Mammary epithelial cell (primary cell): ENCODE measurements at regions of chr11 and their contacts with region 1.

Region 1: DNA sequence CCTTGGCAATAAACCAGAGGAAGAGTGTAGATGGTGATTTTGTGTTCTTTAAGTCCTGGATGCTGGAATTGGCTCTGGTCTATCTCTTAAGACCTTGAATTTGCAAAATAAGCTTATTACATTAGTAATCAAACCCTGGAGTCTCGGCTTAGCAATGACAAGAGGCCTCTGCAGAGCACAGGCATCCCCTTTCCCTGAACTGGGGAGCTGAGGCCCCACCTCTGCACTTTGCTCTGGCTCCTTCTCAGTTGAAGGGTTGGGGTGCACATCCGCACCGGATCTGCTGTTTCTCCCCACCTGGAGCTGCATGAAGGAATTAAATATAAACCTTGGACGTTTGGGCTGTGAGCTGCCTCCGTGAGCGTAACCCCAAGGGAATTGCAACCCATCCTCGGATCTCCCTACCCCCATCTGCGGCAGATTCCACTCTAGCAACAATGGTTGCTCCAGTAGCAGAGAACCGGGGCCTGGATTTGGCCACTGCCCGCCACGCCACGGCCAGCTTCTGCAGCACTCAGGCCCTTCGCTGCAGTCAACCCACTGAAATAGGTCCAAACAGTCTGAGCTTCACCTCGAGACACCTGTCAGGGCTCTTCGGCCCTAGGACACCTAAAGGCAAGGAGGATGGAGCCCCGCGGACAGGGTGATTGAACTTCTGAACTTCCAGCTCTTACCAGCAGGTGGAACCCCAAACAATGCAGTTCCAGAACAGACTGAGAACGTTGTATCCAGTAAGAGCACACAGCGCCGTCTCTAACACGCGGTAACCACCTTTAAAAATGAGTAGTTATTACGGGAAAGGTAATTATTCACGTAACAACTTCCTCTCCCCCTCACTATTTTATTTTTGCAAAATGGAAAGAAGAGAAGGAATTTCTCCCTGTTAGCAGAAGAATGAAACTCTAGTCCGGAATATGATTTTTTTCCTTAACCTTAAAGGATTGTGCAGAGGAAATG is 54.8 kb upstream of the CAPRIN1 start:
- DNase-seq: peak; percentile 69
- H3K4me3 ChIP-seq: no peak overlapping the region
- H3K27ac ChIP-seq: no peak overlapping the region
- H3K4me1 ChIP-seq: peaks cover 9% of the 10 kb centered on the region
- H3K27me3 ChIP-seq: no peaks in the 10 kb centered on the region
- CTCF ChIP-seq: peak; percentile 81 to 86

Region 2: DNA sequence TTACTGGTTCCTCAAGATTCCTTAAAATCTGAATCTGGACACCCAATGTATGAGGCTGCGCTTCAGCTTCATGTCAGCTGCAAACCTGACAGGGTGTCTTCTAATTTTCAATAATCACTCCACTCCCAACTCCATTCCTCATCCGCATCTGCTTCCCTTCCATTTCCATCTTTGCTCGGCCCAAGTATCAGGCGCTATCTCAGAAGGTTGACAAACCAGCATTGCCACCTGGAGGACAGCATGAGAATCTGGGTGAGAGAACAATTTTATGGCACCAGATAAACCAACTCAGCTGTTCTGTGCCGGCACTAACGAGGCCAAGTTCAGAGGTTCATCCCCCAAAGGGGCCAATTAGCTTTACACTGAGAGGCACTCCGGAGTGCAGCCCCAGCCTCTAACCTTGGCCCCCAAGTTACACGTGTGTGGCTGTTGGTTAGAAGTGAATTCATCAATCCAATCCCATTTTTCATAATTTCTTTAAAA is 25.8 kb before region 1 on chr11:
- CTCF ChIA-PET with region 1: interaction called, 18 read pairs
- dilution Hi-C with region 1: no loop called
- in situ Hi-C with region 1: no loop called
- intact Hi-C with region 1: no loop called
- DNase-seq: peak; percentile 42
- H3K4me3 ChIP-seq: no peak overlapping the region
- H3K27ac ChIP-seq: no peak overlapping the region
- H3K4me1 ChIP-seq: no peaks in the 10 kb centered on the region
- H3K27me3 ChIP-seq: no peaks in the 10 kb centered on the region
- CTCF ChIP-seq: peak; percentile 63 to 79

Region 3: DNA sequence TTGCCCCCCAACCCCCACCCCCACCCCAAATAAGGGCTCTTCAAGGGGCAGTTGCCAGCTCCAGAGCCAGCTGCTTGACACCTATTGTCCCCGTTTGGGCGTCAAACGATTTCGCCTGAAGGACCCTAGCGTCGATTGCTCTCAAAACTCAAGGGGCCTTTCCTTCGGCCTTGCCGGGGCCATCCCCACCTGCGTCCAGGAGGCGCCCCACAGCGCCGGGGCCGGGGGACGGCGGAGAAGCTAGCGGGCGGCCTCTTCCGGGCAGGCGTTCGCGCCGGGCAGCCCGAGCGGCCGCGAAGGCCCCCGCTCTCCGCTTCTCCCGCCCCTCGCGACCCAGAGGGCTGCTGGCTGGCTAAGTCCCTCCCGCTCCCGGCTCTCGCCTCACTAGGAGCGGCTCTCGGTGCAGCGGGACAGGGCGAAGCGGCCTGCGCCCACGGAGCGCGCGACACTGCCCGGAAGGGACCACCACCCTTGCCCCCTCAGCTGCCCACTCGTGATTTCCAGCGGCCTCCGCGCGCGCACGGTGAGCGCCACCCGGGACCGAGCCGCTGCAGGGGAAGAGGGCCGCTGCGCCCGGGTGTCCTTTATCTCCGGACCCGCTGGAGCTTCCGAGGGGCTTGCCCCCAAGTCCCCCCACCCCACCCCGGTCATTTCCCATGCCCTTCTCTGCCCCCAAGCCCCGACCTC is 54.7 kb after region 1 on chr11 and contains the start of gene CAPRIN1:
- CTCF ChIA-PET with region 1: interaction called, 6 read pairs
- dilution Hi-C with region 1: no loop called
- in situ Hi-C with region 1: no loop called
- intact Hi-C with region 1: loop called (anchors 1 kb)
- DNase-seq: peak; percentile 89
- H3K4me3 ChIP-seq: peak within 1 kb of the TSS; percentile 90 to 100 (median 99)
- H3K27ac ChIP-seq: peak within 1 kb of the TSS; percentile 94
- H3K4me1 ChIP-seq: peaks cover 10% of the 10 kb centered on the region
- H3K27me3 ChIP-seq: no peaks in the 10 kb centered on the region
- CTCF ChIP-seq: no peak
- total RNA-seq, gene CAPRIN1: 194 to 217 TPM

Region 4: DNA sequence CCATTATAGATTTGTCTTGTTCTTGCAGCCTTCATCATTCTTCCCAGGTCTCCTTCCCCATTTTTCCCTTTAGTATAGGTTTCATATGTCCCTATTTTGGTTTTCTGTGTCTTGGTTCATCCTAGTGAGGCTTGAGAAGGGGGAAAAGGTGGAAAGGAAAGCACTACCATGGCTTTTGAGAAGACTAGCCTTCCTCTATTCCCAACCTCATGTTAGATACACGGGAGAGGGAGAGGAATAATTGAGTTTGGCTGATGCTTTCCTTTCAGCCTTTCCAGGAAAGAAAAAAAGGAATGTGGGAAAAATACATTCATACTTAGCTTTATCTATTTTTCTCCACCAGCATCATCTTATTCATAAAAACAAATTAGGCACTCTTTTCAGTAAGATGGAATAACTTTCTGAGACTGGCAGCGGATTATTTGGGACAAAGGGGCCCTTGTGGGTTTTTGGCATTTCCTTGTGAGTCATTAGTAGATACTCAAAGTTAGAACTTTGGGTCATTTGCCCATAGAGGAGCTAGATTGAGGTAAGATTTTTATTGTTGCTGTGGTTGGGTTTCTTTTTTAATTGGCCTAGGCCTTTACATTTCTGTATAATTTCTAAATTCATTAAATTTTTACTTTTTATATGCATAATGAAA is 78.5 kb after region 1 on chr11:
- CTCF ChIA-PET with region 1: no interaction called
- dilution Hi-C with region 1: no loop called
- in situ Hi-C with region 1: loop called in 1 of 2 experiments (anchors 10 kb)
- intact Hi-C with region 1: loop called (anchors 1 kb)
- DNase-seq: peak; percentile 83
- H3K4me3 ChIP-seq: no peak overlapping the region
- H3K27ac ChIP-seq: peak overlapping the region; percentile 86
- H3K4me1 ChIP-seq: peaks cover 30% of the 10 kb centered on the region
- H3K27me3 ChIP-seq: no peaks in the 10 kb centered on the region
- CTCF ChIP-seq: no peak

Region 5: GRCh38 chr11:34105079-34105956 is 108.5 kb after region 1 on chr11 and contains the start of gene NAT10:
- CTCF ChIA-PET with region 1: no interaction called
- dilution Hi-C with region 1: no loop called
- in situ Hi-C with region 1: no loop called
- intact Hi-C with region 1: loop called (anchors 1 kb)
- DNase-seq: peak; percentile 99
- H3K4me3 ChIP-seq: peak within 1 kb of the TSS; percentile 58 to 77 (median 76)
- H3K27ac ChIP-seq: peak within 1 kb of the TSS; percentile 87
- H3K4me1 ChIP-seq: peaks cover 12% of the 10 kb centered on the region
- H3K27me3 ChIP-seq: no peaks in the 10 kb centered on the region
- CTCF ChIP-seq: peak in 1 of 2 donors; percentile 29
- total RNA-seq, gene NAT10: 28.2 to 71.5 TPM

Region 6: GRCh38 chr11:34366522-34366921 is 369.7 kb after region 1 on chr11:
- CTCF ChIA-PET with region 1: no interaction called
- dilution Hi-C with region 1: no loop called
- in situ Hi-C with region 1: loop called (anchors 10 to 25 kb)
- intact Hi-C with region 1: no loop called
- DNase-seq: no peak
- H3K4me3 ChIP-seq: no peak overlapping the region
- H3K27ac ChIP-seq: no peak overlapping the region
- H3K4me1 ChIP-seq: peaks cover 5% of the 10 kb centered on the region
- H3K27me3 ChIP-seq: no peaks in the 10 kb centered on the region
- CTCF ChIP-seq: peak; percentile 53 to 69

Region 7: GRCh38 chr11:34492806-34493414 is 496.1 kb after region 1 on chr11:
- CTCF ChIA-PET with region 1: no interaction called
- dilution Hi-C with region 1: no loop called
- in situ Hi-C with region 1: no loop called
- intact Hi-C with region 1: loop called (anchors 5 kb)
- DNase-seq: peak; percentile 47
- H3K4me3 ChIP-seq: no peak overlapping the region
- H3K27ac ChIP-seq: no peak overlapping the region
- H3K4me1 ChIP-seq: no peaks in the 10 kb centered on the region
- H3K27me3 ChIP-seq: no peaks in the 10 kb centered on the region
- CTCF ChIP-seq: peak; percentile 63 to 71